ENCODE measurements at regions of chr11 and their contacts with region 1.

Region 1: GRCh38 chr11:33857933-33858371 is 33.9 kb downstream of the LMO2 start:
- H3K4me3 Mint-ChIP-seq: no peak overlapping the region
- H3K27ac Mint-ChIP-seq: no peak overlapping the region
- H3K4me1 Mint-ChIP-seq: peaks cover 30% of the 10 kb centered on the region
- H3K27me3 Mint-ChIP-seq: no peaks in the 10 kb centered on the region

Region 2: DNA sequence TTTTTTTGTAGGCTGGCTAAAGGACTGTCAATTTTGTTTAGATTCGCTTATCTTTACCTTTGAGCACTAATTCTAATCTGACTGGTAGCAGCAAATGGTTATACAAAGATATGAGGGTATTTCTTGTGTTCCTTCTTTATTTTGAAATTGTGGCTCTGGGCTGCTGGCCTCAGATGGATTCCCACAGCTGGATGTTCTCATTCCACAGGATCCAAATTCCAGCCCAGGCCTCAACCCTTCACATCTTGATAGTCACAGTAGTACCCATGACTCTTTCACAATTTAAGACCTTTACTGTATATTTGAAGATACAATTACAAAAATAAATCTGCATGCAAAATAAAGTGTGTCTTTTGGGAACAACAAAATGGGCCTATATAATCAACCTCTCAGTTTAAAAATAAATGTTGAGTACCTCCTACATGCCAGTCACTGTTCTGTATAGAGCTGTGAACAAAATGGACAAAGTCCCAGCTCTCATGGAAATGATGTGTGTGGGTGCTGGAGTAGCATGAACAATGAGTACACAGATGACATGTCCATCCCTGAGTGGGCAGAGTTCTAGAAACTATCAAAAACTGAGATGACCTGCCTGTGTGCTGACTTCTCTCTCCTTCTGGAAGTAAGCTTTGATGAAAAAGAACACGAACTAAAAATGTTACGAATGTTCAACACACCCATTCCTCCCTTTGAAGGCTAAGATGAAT is 31.9 kb before region 1 on chr11:
- intact Hi-C with region 1: no loop called
- H3K4me3 Mint-ChIP-seq: no peak overlapping the region
- H3K27ac Mint-ChIP-seq: no peak overlapping the region
- H3K4me1 Mint-ChIP-seq: peaks cover 13% of the 10 kb centered on the region
- H3K27me3 Mint-ChIP-seq: peaks cover 56% of the 10 kb centered on the region

Region 3: DNA sequence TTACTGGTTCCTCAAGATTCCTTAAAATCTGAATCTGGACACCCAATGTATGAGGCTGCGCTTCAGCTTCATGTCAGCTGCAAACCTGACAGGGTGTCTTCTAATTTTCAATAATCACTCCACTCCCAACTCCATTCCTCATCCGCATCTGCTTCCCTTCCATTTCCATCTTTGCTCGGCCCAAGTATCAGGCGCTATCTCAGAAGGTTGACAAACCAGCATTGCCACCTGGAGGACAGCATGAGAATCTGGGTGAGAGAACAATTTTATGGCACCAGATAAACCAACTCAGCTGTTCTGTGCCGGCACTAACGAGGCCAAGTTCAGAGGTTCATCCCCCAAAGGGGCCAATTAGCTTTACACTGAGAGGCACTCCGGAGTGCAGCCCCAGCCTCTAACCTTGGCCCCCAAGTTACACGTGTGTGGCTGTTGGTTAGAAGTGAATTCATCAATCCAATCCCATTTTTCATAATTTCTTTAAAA is 113.1 kb after region 1 on chr11:
- intact Hi-C with region 1: loop called (anchors 1 kb)
- H3K4me3 Mint-ChIP-seq: no peak overlapping the region
- H3K27ac Mint-ChIP-seq: no peak overlapping the region
- H3K4me1 Mint-ChIP-seq: peaks cover 19% of the 10 kb centered on the region
- H3K27me3 Mint-ChIP-seq: no peaks in the 10 kb centered on the region

Measured in dendritic cell treated with granulocyte-macrophage colony-stimulating factor and Interleukin-4, amounts not matched to agents 40 ng/mL and 50 ng/mL, for 4 days (primary cell).